ENCODE measurements at regions of chr15 and their contacts with region 1.

Region 1: DNA sequence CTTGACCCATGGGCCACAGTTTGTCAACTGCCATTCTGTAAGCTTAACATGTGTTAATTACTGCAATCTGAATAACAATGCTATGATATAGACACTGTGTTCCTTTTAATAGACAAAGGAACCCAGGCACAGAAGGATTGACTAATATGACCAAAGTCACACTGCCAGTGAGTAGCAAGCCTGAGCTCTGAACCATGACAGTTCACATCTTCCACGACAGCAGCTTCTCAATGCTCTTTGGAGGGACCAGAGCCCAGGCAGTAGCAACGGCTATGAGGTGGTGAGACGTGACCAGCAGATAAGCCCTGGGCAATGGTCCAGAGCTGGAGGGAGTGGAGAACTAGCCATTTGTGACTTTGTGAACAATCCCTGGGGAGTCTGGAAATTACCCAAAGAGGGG is 19.4 kb downstream of the CA12 start:
- DNase-seq: no peak
- ATAC-seq: peak; percentile 38; the same call in 1 of the 3 replicates
- H3K4me3 ChIP-seq: no peak overlapping the region
- H3K27ac ChIP-seq: no peak overlapping the region
- H3K4me1 ChIP-seq: peaks cover 5% of the 10 kb centered on the region; the same call in 1 of the 2 replicates
- H3K27me3 ChIP-seq: peaks cover 0 to 1% of the 10 kb centered on the region in 2 experiments; a peak in 2 of 4 replicates
- CTCF ChIP-seq: no peak
- EP300 ChIP-seq: no peak
- POLR2A ChIP-seq: no peak
- RAD21 ChIP-seq: no peak

Region 2: GRCh38 chr15:63256433-63257274 is 105.5 kb before region 1 on chr15:
- CTCF ChIA-PET with region 1: no interaction called
- POLR2A ChIA-PET with region 1: no interaction called
- RAD21 ChIA-PET with region 1: no interaction called
- SMC1A ChIA-PET with region 1: no interaction called
- in situ Hi-C with region 1: no loop called
- intact Hi-C with region 1: no loop called
- DNase-seq: no peak
- ATAC-seq: no peak
- H3K4me3 ChIP-seq: no peak overlapping the region
- H3K27ac ChIP-seq: no peak overlapping the region
- H3K4me1 ChIP-seq: no peaks in the 10 kb centered on the region
- H3K27me3 ChIP-seq: no peaks in the 10 kb centered on the region
- CTCF ChIP-seq: no peak
- EP300 ChIP-seq: no peak
- POLR2A ChIP-seq: no peak
- RAD21 ChIP-seq: no peak

Region 3: DNA sequence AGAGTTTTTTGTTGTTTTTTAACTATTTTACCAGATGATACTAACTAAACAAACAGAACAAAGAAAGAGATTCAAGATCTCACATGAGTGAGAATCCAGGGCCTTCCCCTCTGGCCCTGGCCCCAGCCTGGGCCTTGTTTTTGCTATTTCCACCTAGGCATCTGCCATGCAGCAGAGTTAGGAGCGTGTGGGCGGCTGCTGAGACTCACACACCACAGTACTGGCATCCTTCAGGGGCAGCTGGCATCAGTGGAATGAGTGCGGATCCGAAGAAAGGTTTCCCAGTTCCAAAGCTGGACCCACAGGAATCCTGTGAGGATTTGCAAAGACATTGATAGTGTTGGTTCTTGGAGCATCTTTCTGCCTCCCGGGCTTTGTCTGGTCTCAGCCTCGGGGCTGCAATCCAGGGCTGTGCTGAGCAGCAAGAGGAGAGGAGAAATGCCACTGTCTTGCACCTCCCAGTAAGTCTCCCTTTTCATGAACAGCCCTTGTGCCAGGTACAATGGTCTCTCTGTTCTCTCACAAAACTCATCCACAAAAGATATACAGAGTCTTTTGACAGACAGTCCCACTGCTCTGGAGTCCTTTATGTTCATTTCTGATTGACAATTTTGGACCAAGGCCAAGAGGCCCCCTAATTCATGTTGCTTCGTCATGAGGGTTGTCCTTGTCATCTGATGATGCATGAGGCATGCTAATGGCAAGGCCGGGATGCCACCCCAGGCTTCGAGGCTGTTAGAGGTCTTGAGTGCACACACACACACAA is 38.2 kb before region 1 on chr15:
- CTCF ChIA-PET with region 1: no interaction called
- POLR2A ChIA-PET with region 1: no interaction called
- RAD21 ChIA-PET with region 1: no interaction called
- SMC1A ChIA-PET with region 1: no interaction called
- in situ Hi-C with region 1: no loop called
- intact Hi-C with region 1: loop called (anchors 1 kb)
- DNase-seq: no peak
- ATAC-seq: no peak
- H3K4me3 ChIP-seq: no peak overlapping the region
- H3K27ac ChIP-seq: no peak overlapping the region
- H3K4me1 ChIP-seq: no peaks in the 10 kb centered on the region
- H3K27me3 ChIP-seq: peaks cover 0 to 3% of the 10 kb centered on the region in 2 experiments; a peak in 2 of 4 replicates
- CTCF ChIP-seq: no peak
- EP300 ChIP-seq: no peak
- POLR2A ChIP-seq: no peak
- RAD21 ChIP-seq: no peak

Measured in GM12878 (cell line).